Ascending aorta (tissue), 2 donors: ENCODE measurements at regions of chr9 and their contacts with region 1.

Region 1: DNA sequence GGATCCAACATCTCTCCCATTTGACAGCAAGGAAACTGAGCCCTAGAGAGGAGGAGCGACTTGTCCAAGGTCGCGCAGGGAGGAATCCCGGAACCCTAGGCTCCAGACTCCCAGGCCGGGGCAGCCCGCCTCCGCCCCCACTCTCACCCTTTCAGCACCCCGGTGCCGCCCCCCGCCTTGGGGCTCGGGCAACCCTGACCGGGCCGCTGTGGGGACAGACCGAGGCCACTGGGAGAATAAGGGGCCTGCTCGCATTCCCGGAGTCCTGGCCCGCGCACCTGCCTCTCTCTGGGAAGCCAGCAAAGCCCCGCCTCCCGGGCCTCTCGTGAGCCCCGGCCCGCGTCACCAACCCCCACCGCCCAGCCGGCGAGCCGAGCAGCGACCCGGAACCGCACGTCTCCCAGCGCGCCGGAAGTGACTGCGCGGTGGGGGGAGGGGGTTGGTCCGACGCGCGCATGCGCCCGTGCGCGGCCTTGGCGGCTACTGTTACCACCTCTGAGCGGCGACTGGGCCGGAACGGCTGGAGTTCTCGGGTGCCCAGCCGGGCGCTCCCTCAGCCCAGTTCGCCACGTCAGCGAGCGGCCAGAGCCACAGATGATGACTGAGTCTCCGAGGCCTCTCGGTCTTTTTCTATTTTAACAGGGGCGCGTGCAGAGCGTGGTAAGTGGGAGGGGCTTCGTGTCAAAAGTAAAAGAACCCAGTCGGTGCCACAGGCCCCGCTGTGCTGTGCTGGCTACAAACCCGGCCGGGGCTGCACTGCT is at the start of gene GOLGA1:
- DNase-seq: peak; percentile 80 to 98
- H3K4me3 ChIP-seq: peak within 1 kb of the TSS; percentile 68 to 91
- H3K27ac ChIP-seq: peak within 1 kb of the TSS; percentile 92 to 94
- H3K4me1 ChIP-seq: peaks cover 6 to 8% of the 10 kb centered on the region in 2 donors
- H3K27me3 ChIP-seq: no peaks in the 10 kb centered on the region
- CTCF ChIP-seq: no peak
- total RNA-seq, gene GOLGA1: 36.8 TPM

Region 2: DNA sequence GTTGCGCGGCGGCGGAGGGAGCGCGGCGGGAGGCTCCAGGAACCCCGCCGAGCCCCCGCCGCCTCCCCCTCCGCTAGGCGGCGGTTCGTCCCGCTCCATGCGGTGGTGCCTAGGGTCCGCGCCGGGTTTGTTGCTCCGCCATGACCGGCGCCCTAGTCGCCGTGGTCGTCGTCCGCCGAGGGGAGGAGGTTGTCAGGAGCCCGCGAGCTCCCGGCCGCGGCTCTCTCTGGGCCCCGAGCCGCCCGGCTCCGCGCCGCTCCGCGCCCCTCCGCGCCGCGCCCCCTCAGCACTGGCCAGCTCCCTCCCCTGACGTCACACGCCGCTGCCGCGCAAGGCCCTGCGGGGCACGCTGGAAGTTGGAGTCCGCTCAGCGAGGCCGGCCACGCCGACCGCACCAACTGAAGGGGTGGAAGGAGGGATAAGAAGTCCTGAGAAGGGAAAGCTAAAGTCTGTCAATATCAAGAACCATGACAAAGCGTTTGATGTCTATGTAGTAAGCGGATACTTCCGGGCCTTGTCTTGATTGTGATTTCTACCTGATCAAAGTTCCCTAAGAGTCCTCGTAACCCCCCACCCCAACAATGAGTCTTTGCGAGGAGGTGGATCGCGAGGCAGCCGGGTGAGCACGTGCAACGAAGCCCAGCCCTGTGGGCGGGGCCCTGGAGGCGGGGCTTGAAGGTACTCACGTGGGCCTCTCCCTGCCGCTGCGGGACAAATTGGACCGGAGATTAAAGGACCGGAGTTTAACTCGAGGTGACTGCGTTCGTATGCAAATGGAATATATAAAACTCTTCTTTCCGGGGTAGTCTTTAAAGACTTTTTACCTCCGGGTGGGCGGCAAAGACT is 169.6 kb before region 1 on chr9 and contains the start of gene NR6A1:
- intact Hi-C with region 1: loop called (anchors 1 kb)
- DNase-seq: peak; percentile 70 to 96
- H3K4me3 ChIP-seq: peak within 1 kb of the TSS; percentile 71 to 95
- H3K27ac ChIP-seq: no peak within 1 kb of the TSS
- H3K4me1 ChIP-seq: peaks cover 0 to 20% of the 10 kb centered on the region in 2 donors
- H3K27me3 ChIP-seq: peaks cover 7% of the 10 kb centered on the region
- CTCF ChIP-seq: peak in 2 of 3 experiments; percentile 22 to 26
- total RNA-seq, gene NR6A1: 0.53 TPM

Region 3: GRCh38 chr9:125143375-125144090 is 202.7 kb after region 1 on chr9 and contains the start of gene SCAI:
- intact Hi-C with region 1: loop called (anchors 1 kb)
- DNase-seq: peak; percentile 97 to 100
- H3K4me3 ChIP-seq: peak within 1 kb of the TSS; percentile 76 to 95
- H3K27ac ChIP-seq: peak within 1 kb of the TSS; percentile 56 to 63
- H3K4me1 ChIP-seq: peaks cover 0 to 8% of the 10 kb centered on the region in 2 donors
- H3K27me3 ChIP-seq: no peaks in the 10 kb centered on the region
- CTCF ChIP-seq: peak; percentile 98 to 99 (median 99)
- total RNA-seq, gene SCAI: 2.4 TPM

Region 4: DNA sequence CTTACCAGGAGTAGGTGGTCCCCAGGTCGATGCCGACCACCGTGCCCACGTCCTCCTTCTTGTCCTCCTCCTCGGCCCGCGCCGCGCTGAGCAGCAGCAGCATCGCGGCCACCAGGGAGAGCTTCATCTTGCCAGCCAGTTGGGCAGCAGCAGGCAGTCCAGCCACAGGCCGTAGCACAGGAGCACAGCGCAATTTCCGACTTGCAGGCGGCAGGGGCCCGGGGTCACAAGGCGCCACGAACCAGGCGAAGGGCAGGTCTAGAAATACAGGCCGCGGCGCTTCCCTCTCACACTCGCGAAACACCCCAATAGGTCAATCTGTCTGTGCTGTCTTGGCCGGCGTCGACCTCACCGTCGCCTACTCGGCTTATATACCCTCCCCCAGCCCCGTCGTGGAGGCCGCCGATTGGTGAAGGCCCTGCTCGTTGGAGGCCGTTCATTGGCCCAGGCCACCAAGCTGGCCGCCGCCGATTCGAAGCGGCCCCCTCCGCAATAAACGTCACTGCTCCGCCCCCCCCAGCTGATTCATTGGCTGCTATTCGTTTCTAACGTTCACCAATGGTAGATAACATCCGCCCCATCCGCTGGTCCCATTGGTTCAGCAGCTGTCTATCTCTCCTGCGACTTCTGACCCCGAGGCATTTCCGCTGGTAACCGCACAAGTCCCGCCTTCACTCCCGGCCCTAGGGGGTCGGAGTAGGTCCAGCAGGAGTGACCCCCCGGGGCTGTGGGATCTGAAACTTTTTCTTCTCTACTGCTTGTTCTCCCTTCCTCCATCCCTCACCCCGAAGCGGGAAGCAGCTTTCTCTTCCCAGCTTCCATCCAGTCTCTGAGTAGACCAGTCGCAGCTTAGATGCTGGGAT is 300.4 kb after region 1 on chr9 and contains the start of gene HSPA5:
- intact Hi-C with region 1: loop called (anchors 1 kb)
- DNase-seq: peak; percentile 99 to 100
- H3K4me3 ChIP-seq: peak within 1 kb of the TSS; percentile 79 to 95
- H3K27ac ChIP-seq: peak within 1 kb of the TSS; percentile 97
- H3K4me1 ChIP-seq: peaks cover 16 to 35% of the 10 kb centered on the region in 2 donors
- H3K27me3 ChIP-seq: no peaks in the 10 kb centered on the region
- CTCF ChIP-seq: peak in 2 of 3 experiments; percentile 19 to 28
- total RNA-seq, gene HSPA5: 133 TPM

Region 5: GRCh38 chr9:125746017-125746773 is 805.3 kb after region 1 on chr9:
- intact Hi-C with region 1: loop called (anchors 10 kb)
- DNase-seq: peak; percentile 82 to 97
- H3K4me3 ChIP-seq: peak overlapping the region; percentile 65 to 88
- H3K27ac ChIP-seq: peak overlapping the region; percentile 79 to 93
- H3K4me1 ChIP-seq: no peaks in the 10 kb centered on the region
- H3K27me3 ChIP-seq: no peaks in the 10 kb centered on the region
- CTCF ChIP-seq: no peak

Region 6: GRCh38 chr9:126523611-126524111 is 1582.8 kb after region 1 on chr9:
- intact Hi-C with region 1: no loop called
- DNase-seq: no peak
- H3K4me3 ChIP-seq: no peak overlapping the region
- H3K27ac ChIP-seq: no peak overlapping the region
- H3K4me1 ChIP-seq: no peaks in the 10 kb centered on the region
- H3K27me3 ChIP-seq: no peaks in the 10 kb centered on the region
- CTCF ChIP-seq: no peak